ENCODE measurements at regions of chr17 and their contacts with region 1.

Region 1: GRCh38 chr17:57130761-57131461 is 45.9 kb downstream of the AKAP1 start:
- DNase-seq: peak; percentile 70
- ATAC-seq: peak; percentile 97
- H3K4me3 ChIP-seq: no peak overlapping the region; a peak in 1 of 4 replicates
- H3K27ac ChIP-seq: no peak overlapping the region
- H3K4me1 ChIP-seq: peaks cover 0 to 3% of the 10 kb centered on the region in 2 experiments; a peak in 1 of 4 replicates
- H3K27me3 ChIP-seq: no peaks in the 10 kb centered on the region
- CTCF ChIP-seq: peak; percentile 65 to 86 (median 82)
- POLR2A ChIP-seq: no peak
- RAD21 ChIP-seq: peak; percentile 87

Region 2: GRCh38 chr17:57114085-57114673 is 16.7 kb before region 1 on chr17:
- CTCF ChIA-PET with region 1: no interaction called
- POLR2A ChIA-PET with region 1: no interaction called
- RAD21 ChIA-PET with region 1: no interaction called
- intact Hi-C with region 1: no loop called
- DNase-seq: no peak
- ATAC-seq: peak; percentile 87
- H3K4me3 ChIP-seq: no peak overlapping the region
- H3K27ac ChIP-seq: no peak overlapping the region
- H3K4me1 ChIP-seq: peaks cover 7% of the 10 kb centered on the region in 2 experiments
- H3K27me3 ChIP-seq: no peaks in the 10 kb centered on the region
- CTCF ChIP-seq: peak; percentile 73 to 100 (median 99)
- POLR2A ChIP-seq: no peak
- RAD21 ChIP-seq: peak; percentile 82

Region 3: GRCh38 chr17:57597531-57598453 is 466.9 kb after region 1 on chr17:
- CTCF ChIA-PET with region 1: interaction called, 3 read pairs
- POLR2A ChIA-PET with region 1: no interaction called
- RAD21 ChIA-PET with region 1: interaction called in 1 of 2 experiments, 3 read pairs
- intact Hi-C with region 1: loop called (anchors 5 kb)
- DNase-seq: peak; percentile 65
- ATAC-seq: peak; percentile 91
- H3K4me3 ChIP-seq: no peak overlapping the region
- H3K27ac ChIP-seq: peak overlapping the region; percentile 37; the same call in 1 of the 2 replicates
- H3K4me1 ChIP-seq: peaks cover 5 to 13% of the 10 kb centered on the region in 2 experiments; a peak in 3 of 4 replicates
- H3K27me3 ChIP-seq: no peaks in the 10 kb centered on the region
- CTCF ChIP-seq: peak; percentile 93 to 98 (median 98)
- POLR2A ChIP-seq: no peak
- RAD21 ChIP-seq: peak; percentile 80

Region 4: DNA sequence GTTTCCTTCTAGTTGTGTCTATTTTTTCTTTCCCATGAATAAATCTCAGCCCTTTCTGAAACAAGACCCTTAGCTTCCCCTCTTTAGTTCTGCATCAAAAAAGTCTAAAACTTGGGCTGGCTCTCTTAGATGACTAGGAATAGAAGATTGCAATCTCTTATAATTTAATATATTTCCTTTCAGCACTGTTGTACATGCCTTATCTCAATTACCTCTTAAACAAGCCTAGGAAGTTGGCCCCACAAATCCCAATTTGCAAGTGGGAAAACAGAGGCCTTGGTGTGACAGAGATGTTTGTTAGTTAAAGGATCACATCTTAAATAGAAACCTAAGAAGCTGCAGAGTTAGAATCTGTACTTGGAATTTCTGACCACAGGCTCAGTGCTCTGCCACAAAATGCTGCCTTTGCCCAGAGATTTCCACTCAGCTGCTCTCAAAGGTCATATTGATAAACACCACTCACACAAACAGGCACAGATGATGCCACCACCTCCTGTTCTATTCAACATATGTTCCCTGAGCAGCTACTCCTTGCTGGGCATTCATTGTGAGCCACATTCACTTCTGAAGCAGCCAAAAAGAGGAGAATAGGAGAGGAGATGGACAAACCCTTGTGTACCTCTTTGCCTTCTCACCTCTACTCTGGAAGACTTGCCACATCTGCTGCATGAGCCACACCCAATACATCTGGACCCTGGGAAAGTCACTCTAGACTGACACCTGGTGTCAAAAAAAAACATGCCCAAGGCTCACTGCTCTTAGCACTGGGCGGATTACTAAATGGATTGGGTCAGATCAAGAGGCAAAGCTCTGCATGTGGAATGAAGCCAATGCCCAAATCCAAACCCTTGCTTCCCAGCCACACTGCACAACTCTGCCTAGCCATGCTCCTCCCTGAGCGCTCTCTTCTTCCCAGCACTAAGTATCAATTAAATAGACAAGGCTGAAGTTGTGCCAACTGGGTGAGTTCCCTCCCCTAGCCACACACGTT is 608.8 kb after region 1 on chr17:
- CTCF ChIA-PET with region 1: interaction called, 12 read pairs
- POLR2A ChIA-PET with region 1: no interaction called
- RAD21 ChIA-PET with region 1: no interaction called
- intact Hi-C with region 1: loop called (anchors 1 kb)
- DNase-seq: peak; percentile 61
- ATAC-seq: peak; percentile 91
- H3K4me3 ChIP-seq: no peak overlapping the region
- H3K27ac ChIP-seq: no peak overlapping the region
- H3K4me1 ChIP-seq: no peaks in the 10 kb centered on the region
- H3K27me3 ChIP-seq: peaks cover 10% of the 10 kb centered on the region; the same call in 1 of the 2 replicates
- CTCF ChIP-seq: peak; percentile 76 to 85 (median 85)
- POLR2A ChIP-seq: no peak
- RAD21 ChIP-seq: peak; percentile 82

Region 5: DNA sequence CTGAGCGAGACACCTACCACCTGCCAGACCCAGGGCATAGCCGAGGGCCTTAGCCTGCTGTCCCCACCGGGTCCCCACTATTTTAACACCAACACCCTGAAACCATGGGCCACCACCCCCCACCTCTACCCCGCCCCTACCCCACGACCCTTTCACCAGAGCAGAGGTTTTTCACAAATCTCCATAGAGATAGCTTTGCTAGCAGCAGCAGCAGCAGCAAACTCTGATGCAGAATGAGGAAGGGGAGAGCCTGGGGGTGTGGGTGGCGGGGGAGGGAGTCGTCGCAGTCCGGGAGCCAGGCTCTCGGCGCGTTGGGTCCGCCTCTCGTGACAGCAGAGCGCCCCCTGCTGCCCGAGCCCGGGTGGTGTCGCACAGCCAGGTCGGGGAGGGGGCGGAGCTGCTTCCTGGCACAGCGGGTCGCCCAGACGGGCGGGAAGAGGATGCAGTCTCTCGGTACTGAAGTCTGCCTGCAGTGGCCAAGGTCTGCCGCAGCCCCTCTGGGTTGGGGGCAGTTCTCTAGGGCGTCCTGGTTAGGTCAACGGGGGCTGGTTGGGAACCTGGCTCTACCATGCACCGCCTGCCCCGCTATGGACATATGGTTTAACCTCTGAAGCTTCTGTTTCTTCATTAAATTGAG is 652.3 kb after region 1 on chr17:
- CTCF ChIA-PET with region 1: interaction called, 24 read pairs
- POLR2A ChIA-PET with region 1: interaction called, 3 read pairs
- RAD21 ChIA-PET with region 1: no interaction called
- intact Hi-C with region 1: no loop called
- DNase-seq: peak; percentile 18
- ATAC-seq: peak; percentile 98
- H3K4me3 ChIP-seq: peak overlapping the region in 1 of 2 experiments; percentile 13; a peak in 1 of 4 replicates
- H3K27ac ChIP-seq: no peak overlapping the region
- H3K4me1 ChIP-seq: peaks cover 7 to 11% of the 10 kb centered on the region in 2 experiments; a peak in 2 of 4 replicates
- H3K27me3 ChIP-seq: peaks cover 20% of the 10 kb centered on the region
- CTCF ChIP-seq: peak; percentile 78 to 100 (median 99)
- POLR2A ChIP-seq: no peak
- RAD21 ChIP-seq: peak; percentile 83

Region 6: DNA sequence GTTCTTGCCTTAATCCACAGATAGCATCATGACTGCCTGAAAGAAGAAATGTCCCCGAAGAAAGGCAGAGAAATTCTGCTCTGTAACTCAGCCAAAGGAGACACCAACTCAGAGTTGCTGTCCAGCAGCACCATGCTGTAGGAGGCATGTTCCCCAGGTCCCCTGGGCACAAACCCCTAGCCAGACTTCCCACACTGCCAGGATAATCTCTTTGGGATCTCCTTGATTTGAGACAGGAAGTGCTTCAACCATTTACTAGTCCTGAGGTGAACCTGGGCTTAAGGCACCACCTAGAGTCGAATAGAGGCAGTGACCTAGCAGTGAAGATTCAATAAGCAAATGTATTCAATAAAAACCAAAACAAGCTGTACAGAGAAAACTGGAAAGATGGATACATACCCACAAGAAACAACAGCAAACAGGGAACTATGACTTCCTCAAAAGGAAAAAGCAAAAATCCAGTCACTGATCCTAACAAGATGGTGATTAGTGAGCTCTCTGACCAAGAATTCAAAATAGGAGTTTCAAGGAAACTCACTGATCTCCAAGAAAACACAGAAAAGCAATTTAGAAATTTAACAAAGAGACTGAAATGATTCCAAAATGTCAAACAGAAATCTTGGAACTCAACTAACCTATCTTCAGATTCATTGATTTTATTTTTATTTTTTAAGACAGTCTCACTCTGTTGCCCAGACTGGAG is 1041.6 kb after region 1 on chr17:
- CTCF ChIA-PET with region 1: no interaction called
- POLR2A ChIA-PET with region 1: no interaction called
- RAD21 ChIA-PET with region 1: no interaction called
- intact Hi-C with region 1: loop called (anchors 5 kb)
- DNase-seq: peak; percentile 79
- ATAC-seq: peak; percentile 97
- H3K4me3 ChIP-seq: no peak overlapping the region
- H3K27ac ChIP-seq: no peak overlapping the region
- H3K4me1 ChIP-seq: 0 out of 4 replicates have a peak, but pooled peaks cover 0 to 2% of the 10 kb centered on the region in 2 experiments
- H3K27me3 ChIP-seq: peaks cover 26% of the 10 kb centered on the region
- CTCF ChIP-seq: peak; percentile 85 to 94 (median 92)
- POLR2A ChIP-seq: no peak
- RAD21 ChIP-seq: peak; percentile 91